PC-9 (cell line): ENCODE measurements at regions of chr2 and their contacts with region 1.

Region 1: GRCh38 chr2:202249521-202249850 is 11.1 kb upstream of the SUMO1 start:
- DNase-seq: peak in 1 of 2 experiments; percentile 79
- H3K4me3 ChIP-seq: peak overlapping the region; percentile 40; the same call in 1 of the 2 replicates
- H3K27ac ChIP-seq: peak overlapping the region; percentile 85
- H3K4me1 ChIP-seq: 0 out of 2 replicates have a peak, but pooled peaks cover 19% of the 10 kb centered on the region
- H3K27me3 ChIP-seq: no peaks in the 10 kb centered on the region
- CTCF ChIP-seq: no peak

Region 2: DNA sequence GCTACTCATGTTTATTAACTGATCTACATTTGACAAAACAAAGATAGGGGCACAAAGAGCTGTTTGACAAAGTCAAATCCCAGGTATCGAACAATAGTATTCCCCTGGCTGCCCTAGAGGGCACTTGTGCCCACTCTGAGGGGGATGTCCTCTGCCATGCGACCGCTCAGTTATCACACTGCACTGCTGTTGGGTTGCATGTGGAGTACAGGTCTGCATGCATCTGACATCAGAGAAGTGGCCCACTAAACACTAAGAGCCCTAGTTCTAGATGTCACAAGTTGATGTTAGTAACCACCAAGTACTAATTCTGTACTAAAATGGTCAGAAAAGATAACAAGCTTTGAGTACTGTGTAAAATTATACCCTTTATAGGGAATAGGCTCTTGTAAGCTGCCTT is 872.3 kb before region 1 on chr2:
- CTCF ChIA-PET with region 1: no interaction called
- POLR2A ChIA-PET with region 1: no interaction called
- intact Hi-C with region 1: no loop called
- DNase-seq: no peak
- H3K4me3 ChIP-seq: no peak overlapping the region
- H3K27ac ChIP-seq: no peak overlapping the region
- H3K4me1 ChIP-seq: no peaks in the 10 kb centered on the region
- H3K27me3 ChIP-seq: no peaks in the 10 kb centered on the region
- CTCF ChIP-seq: no peak

Region 3: GRCh38 chr2:202158796-202159195 is 90.7 kb before region 1 on chr2:
- CTCF ChIA-PET with region 1: no interaction called
- POLR2A ChIA-PET with region 1: no interaction called
- intact Hi-C with region 1: no loop called
- DNase-seq: no peak
- H3K4me3 ChIP-seq: no peak overlapping the region
- H3K27ac ChIP-seq: no peak overlapping the region
- H3K4me1 ChIP-seq: no peaks in the 10 kb centered on the region
- H3K27me3 ChIP-seq: no peaks in the 10 kb centered on the region
- CTCF ChIP-seq: no peak; the same call in 1 of the 2 replicates

Region 4: GRCh38 chr2:202238234-202239197 is 11.0 kb before region 1 on chr2 and contains the start of gene SUMO1:
- CTCF ChIA-PET with region 1: no interaction called
- POLR2A ChIA-PET with region 1: no interaction called
- intact Hi-C with region 1: loop called (anchors 1 kb)
- DNase-seq: peak; percentile 67 to 71
- H3K4me3 ChIP-seq: peak within 1 kb of the TSS; percentile 87
- H3K27ac ChIP-seq: peak within 1 kb of the TSS; percentile 25; the same call in 1 of the 2 replicates
- H3K4me1 ChIP-seq: peaks cover 7% of the 10 kb centered on the region
- H3K27me3 ChIP-seq: no peaks in the 10 kb centered on the region
- CTCF ChIP-seq: no peak
- total RNA-seq, gene SUMO1: 66.3 and 100 TPM in 2 replicates

Region 5: DNA sequence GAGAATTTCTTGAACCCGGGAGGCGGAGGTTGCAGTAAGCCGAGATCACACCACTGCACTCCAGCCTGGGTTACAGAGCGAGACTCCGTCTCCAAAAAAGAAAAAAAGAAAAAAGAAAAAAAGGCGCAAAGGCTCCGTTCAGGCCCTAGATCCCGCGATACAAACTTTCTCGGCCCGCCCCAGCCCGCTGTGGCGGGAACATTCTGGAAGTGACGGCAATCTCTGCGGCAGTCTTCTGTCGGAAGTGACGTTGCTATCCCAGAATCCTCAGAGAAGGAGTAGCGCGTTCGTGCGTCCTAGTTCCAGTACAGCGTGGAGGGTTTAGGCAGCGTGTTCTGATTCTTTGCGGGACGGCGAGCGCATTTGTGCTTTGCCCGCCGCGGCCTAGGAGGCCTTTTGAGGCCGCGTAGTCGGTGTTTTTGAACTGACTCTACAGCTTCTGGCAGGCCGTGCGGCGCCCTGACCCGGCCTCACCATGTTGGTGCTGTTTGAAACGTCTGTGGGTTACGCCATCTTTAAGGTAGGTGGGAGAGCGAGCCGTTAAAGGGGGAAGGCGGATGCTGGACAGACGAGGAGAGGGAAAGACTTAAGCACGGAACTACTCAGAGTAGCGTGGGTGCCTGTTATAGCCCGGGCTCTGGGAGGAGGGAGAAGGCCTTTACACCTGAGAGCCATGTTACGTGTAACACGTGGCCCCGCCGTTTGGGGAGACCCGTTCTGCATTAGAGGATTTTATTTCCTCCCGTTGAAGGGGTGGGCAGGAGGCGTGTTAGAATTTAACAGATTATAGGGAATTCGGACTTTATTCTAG is 16.2 kb after region 1 on chr2 and contains the start of gene NOP58:
- CTCF ChIA-PET with region 1: no interaction called
- POLR2A ChIA-PET with region 1: no interaction called
- intact Hi-C with region 1: loop called (anchors 2 kb)
- DNase-seq: peak; percentile 82 to 86
- H3K4me3 ChIP-seq: peak within 1 kb of the TSS; percentile 96
- H3K27ac ChIP-seq: peak within 1 kb of the TSS; percentile 95
- H3K4me1 ChIP-seq: 0 out of 2 replicates have a peak, but pooled peaks cover 17% of the 10 kb centered on the region
- H3K27me3 ChIP-seq: no peaks in the 10 kb centered on the region
- CTCF ChIP-seq: no peak
- total RNA-seq, gene NOP58: 38.2 and 48.5 TPM in 2 replicates